Naive thymus-derived CD4-positive, alpha-beta T cell (primary cell): ENCODE measurements at regions of chr17 and their contacts with region 1.

Region 1: GRCh38 chr17:45277216-45277849 is 15.4 kb upstream of the SPATA32 start:
- DNase-seq: peak; percentile 77 to 89 (median 86)
- ATAC-seq: peak; percentile 98
- H3K4me3 ChIP-seq: no peak overlapping the region
- H3K4me3 Mint-ChIP-seq: peak overlapping the region in 2 of 10 donors; percentile 26 to 28
- H3K27ac ChIP-seq: no peak overlapping the region
- H3K27ac Mint-ChIP-seq: peak overlapping the region; percentile 1 to 77 (median 40)
- H3K4me1 ChIP-seq: peaks cover 0 to 5% of the 10 kb centered on the region in 2 donors
- H3K4me1 Mint-ChIP-seq: peaks cover 3 to 22% (median 10%) of the 10 kb centered on the region in 7 donors
- H3K27me3 ChIP-seq: no peaks in the 10 kb centered on the region
- H3K27me3 Mint-ChIP-seq: no peaks in the 10 kb centered on the region

Region 2: GRCh38 chr17:44279666-44280391 is 997.5 kb before region 1 on chr17:
- CTCF ChIA-PET with region 1: no interaction called
- POLR2A ChIA-PET with region 1: no interaction called
- intact Hi-C with region 1: no loop called
- DNase-seq: peak in 1 of 9 donors; percentile 15
- ATAC-seq: peak; percentile 96
- H3K4me3 ChIP-seq: no peak overlapping the region
- H3K4me3 Mint-ChIP-seq: no peak overlapping the region
- H3K27ac ChIP-seq: no peak overlapping the region
- H3K27ac Mint-ChIP-seq: peak overlapping the region in 2 of 9 donors; percentile 32 to 36
- H3K4me1 ChIP-seq: no peaks in the 10 kb centered on the region
- H3K4me1 Mint-ChIP-seq: peaks cover 0 to 15% (median 0%) of the 10 kb centered on the region in 7 donors
- H3K27me3 ChIP-seq: no peaks in the 10 kb centered on the region
- H3K27me3 Mint-ChIP-seq: peaks cover 0 to 18% (median 2%) of the 10 kb centered on the region in 5 donors

Region 3: DNA sequence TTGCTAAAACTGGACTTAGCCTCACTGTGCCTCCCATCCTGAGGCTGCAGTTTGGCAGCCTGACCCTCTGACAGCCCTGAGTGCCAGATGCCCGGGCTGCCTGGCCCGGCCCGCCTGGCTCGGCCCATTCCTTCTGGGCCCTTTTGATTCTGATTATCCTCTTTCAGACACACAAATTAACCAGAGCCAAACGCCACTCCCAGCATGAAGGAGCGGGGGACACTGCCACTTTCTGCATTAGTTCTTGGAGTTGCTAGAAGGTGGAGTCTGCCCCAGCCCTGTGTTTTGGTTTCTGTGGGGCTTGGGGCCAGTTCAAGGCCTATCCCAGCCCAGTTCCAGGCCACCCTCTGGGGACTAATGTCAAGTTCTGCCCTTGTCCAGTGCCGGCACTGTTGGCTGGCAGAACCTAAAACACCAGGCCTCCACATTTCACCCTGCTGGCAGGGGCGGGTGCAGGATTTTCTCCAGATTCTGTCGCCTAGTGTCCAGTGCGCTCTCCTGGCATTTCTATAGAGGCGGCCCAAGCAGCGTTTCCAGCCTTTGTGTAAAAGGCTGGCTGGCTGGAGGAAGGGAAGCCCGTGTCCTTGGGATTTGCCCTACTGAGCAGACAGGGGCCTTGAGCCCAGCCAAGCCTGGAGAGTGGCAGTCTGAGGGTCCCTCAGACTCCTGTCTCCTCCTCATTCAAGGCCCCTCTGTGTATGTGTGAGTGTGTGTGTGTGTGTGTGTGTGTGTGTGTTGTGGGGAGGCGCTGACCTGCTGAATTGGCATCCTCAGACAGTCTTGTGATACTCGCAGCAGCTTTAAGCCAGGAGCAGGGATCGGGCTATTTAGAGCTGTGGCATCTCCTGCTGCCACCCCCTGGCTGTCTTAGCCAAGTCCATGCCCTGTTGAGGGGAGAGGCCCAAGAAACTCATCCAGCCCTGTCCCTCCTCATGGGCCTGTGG is 166.4 kb before region 1 on chr17:
- CTCF ChIA-PET with region 1: no interaction called
- POLR2A ChIA-PET with region 1: no interaction called
- intact Hi-C with region 1: no loop called
- DNase-seq: no peak
- ATAC-seq: no peak
- H3K4me3 ChIP-seq: no peak overlapping the region
- H3K4me3 Mint-ChIP-seq: no peak overlapping the region
- H3K27ac ChIP-seq: no peak overlapping the region
- H3K27ac Mint-ChIP-seq: peak overlapping the region in 1 of 9 donors; percentile 78
- H3K4me1 ChIP-seq: no peaks in the 10 kb centered on the region
- H3K4me1 Mint-ChIP-seq: no peaks in the 10 kb centered on the region
- H3K27me3 ChIP-seq: no peaks in the 10 kb centered on the region
- H3K27me3 Mint-ChIP-seq: no peaks in the 10 kb centered on the region

Region 4: DNA sequence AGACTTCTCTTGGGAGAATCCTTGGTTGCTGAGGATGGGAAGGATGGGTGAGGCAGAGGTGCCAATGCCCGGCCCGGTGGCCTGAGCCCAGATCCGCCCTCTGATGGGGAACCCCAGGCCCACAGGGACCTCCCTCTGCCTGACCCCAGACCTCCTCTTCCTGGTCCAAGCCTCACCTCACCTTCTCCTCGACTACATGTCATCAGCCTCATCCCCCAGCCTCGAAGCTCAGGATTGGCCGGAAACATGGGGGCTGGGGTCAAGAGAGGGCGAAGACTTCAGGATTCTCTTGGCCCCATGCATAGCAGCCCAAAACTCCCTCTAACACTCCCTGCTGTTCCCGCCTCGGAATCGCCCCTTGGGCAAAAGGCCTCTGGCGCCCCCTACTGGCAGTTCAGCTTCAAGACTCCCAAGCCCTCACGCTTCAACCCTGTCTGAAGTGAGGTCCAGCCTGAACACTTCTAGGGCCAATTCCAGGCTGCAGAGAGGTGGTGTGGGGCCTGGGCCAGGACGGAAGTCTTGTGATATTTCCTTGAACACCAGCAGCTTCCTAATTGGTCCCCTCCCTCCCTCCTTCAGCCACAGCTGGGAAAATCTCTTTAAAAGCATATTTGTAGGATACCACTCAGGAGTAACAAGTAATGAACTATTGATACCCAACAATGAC is 108.1 kb after region 1 on chr17:
- CTCF ChIA-PET with region 1: interaction called, 92 read pairs
- POLR2A ChIA-PET with region 1: interaction called, 7 read pairs
- intact Hi-C with region 1: loop called (anchors 1 kb)
- DNase-seq: peak; percentile 70 to 92 (median 85)
- ATAC-seq: peak; percentile 96
- H3K4me3 ChIP-seq: no peak overlapping the region
- H3K4me3 Mint-ChIP-seq: peak overlapping the region in 1 of 10 donors; percentile 37
- H3K27ac ChIP-seq: no peak overlapping the region
- H3K27ac Mint-ChIP-seq: peak overlapping the region in 3 of 9 donors; percentile 2 to 91 (median 58)
- H3K4me1 ChIP-seq: peaks cover 0 to 10% of the 10 kb centered on the region in 2 donors
- H3K4me1 Mint-ChIP-seq: peaks cover 11 to 23% (median 15%) of the 10 kb centered on the region in 7 donors
- H3K27me3 ChIP-seq: no peaks in the 10 kb centered on the region
- H3K27me3 Mint-ChIP-seq: peaks cover 0 to 14% (median 5%) of the 10 kb centered on the region in 5 donors